HCT116 (cell line): ENCODE measurements at regions of chr18 and their contacts with region 1.

Region 1: DNA sequence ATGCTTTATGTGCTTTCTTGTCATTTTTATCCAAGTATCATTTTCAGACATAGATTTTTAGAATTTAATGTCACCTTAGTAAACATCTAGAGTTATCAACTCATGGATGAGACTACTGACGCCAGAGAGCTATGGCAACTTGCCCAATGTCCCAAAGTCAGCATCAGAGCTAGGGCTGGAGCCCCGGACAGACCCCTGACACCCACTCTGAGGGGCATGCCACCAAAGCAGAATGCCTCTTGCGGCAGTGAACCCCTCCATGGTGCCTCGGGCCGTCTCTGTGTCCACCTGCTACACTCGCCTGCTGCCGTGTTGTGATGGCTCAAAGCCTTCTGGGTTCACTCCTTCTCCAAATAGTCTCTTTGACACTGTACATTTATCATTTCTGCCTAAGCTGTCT is 5.4 kb downstream of the SIGLEC15 start:
- DNase-seq: no peak
- ATAC-seq: no peak
- H3K4me3 ChIP-seq: no peak overlapping the region
- H3K27ac ChIP-seq: no peak overlapping the region
- H3K4me1 ChIP-seq: peaks cover 0 to 21% of the 10 kb centered on the region in 2 experiments; a peak in 2 of 4 replicates
- H3K27me3 ChIP-seq: no peaks in the 10 kb centered on the region
- CTCF ChIP-seq: no peak
- POLR2A ChIP-seq: no peak
- RAD21 ChIP-seq: no peak

Region 2: DNA sequence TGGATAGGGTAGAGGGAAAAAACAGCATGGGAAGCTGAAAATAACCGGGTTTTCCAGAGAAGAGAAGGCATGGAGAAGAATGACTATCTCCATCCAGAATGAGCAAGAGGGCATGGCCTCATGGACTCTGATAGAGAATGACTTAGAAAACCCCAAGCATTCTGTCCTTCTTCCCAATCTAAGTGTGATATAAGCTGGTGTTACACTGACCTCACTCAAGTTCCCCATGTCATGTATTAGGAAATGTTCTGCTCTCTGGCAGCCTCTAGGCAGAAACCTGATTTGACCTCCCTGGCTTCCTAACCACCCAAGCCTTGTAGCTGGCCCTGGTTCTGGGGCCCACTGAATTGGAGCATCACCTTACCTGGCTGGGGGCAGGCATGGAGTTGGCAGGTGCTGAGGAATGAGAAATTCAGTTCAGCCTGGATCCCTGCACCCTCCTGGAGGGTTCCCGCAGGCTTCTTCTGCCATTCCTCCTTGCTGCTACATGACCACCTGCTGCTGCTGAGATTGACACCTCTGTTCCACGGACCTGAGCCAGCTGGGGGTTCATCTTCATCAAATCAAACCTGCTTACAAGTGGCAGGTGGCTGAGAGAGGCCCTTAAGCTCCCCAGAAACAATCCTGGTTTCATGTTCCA is 10.7 kb before region 1 on chr18:
- CTCF ChIA-PET with region 1: no interaction called
- POLR2A ChIA-PET with region 1: no interaction called
- RAD21 ChIA-PET with region 1: no interaction called
- intact Hi-C with region 1: loop called (anchors 1 kb)
- DNase-seq: no peak
- ATAC-seq: no peak
- H3K4me3 ChIP-seq: no peak overlapping the region
- H3K27ac ChIP-seq: no peak overlapping the region
- H3K4me1 ChIP-seq: no peaks in the 10 kb centered on the region
- H3K27me3 ChIP-seq: no peaks in the 10 kb centered on the region
- CTCF ChIP-seq: no peak
- POLR2A ChIP-seq: no peak
- RAD21 ChIP-seq: no peak